OCI-LY7 (cell line): ENCODE measurements at regions of chr1 and their contacts with region 1.

Region 1: DNA sequence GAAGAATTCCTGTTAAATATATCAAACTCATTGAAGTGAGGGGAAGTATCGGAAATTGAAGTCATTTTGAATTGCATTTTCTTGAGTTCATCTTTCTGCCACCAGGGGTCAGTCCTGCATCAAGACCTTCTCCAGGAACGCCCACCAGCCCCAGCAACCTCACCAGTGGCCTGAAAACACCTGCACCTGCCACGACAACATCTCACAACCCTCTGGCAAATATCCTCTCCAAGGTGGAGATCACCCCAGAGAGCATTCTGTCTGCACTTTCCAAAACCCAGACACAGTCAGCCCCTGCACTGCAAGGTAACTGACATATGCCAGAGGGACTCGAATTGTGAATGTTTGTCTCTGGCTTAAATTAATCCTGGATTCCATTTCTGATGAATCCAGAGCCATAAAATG is 22.8 kb upstream of the TARS2 start:
- DNase-seq: peak; percentile 80
- H3K4me3 ChIP-seq: no peak overlapping the region
- H3K27ac ChIP-seq: no peak overlapping the region
- H3K4me1 ChIP-seq: no peaks in the 10 kb centered on the region
- CTCF ChIP-seq: peak; percentile 84

Region 2: GRCh38 chr1:150449451-150449850 is 15.0 kb before region 1 on chr1:
- CTCF ChIA-PET with region 1: no interaction called
- POLR2A ChIA-PET with region 1: no interaction called
- intact Hi-C with region 1: no loop called
- DNase-seq: no peak
- H3K4me3 ChIP-seq: no peak overlapping the region
- H3K27ac ChIP-seq: no peak overlapping the region
- H3K4me1 ChIP-seq: no peaks in the 10 kb centered on the region
- CTCF ChIP-seq: no peak

Region 3: DNA sequence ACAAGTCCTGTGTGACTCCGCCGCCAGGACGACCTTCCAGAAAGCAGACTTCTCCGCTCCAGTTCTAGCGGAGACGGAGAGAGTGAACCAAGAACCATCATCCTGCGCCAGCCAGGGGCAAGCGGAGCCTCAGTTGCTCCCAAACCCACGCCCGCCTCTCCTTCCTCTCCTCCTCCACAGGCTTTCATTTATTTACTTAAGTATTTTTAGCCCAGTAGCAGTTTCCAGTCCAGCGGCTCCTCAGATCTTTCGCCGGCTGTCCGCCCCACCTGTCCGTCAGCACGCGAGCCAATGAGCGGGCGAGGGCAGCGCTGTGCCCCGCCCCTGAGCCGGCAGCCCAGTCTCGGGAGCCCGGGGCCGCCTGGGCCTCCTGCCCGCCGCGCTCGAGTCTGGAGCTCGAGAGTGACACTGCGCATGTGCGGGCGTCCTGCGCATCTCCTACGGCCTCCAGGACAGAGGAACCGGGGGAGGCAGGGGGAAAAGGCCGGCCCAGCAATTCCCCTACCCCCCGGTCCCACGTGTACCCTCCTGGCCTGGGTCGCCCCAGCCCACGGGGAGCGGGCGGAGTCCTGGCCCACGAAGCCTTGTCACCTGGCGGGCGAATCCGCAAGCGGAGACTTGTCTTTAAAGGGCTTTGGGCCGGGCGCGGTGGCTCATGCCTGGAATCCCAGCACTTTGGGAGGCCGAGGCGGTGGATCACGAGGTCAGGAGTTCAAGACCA is 51.1 kb after region 1 on chr1 and contains the start of gene FALEC:
- CTCF ChIA-PET with region 1: no interaction called
- POLR2A ChIA-PET with region 1: no interaction called
- intact Hi-C with region 1: loop called (anchors 1 kb)
- DNase-seq: peak; percentile 95
- H3K4me3 ChIP-seq: peak within 1 kb of the TSS; percentile 65
- H3K27ac ChIP-seq: peak within 1 kb of the TSS; percentile 29
- H3K4me1 ChIP-seq: peaks cover 29% of the 10 kb centered on the region
- CTCF ChIP-seq: no peak
- total RNA-seq, gene FALEC: 0.47 and 2.8 TPM in 2 replicates

Region 4: GRCh38 chr1:150529017-150529416 is 64.6 kb after region 1 on chr1:
- CTCF ChIA-PET with region 1: no interaction called
- POLR2A ChIA-PET with region 1: interaction called, 9 read pairs
- intact Hi-C with region 1: loop called (anchors 2 kb)
- DNase-seq: no peak
- H3K4me3 ChIP-seq: no peak overlapping the region
- H3K27ac ChIP-seq: no peak overlapping the region
- H3K4me1 ChIP-seq: no peaks in the 10 kb centered on the region
- CTCF ChIP-seq: no peak